ENCODE measurements at regions of chr10 and their contacts with region 1.

Region 1: GRCh38 chr10:89805599-89806013 is 104.2 kb downstream of the KIF20B start:
- ATAC-seq: no peak
- H3K4me3 ChIP-seq: no peak overlapping the region
- H3K27ac ChIP-seq: no peak overlapping the region
- H3K4me1 ChIP-seq: no peaks in the 10 kb centered on the region

Region 2: DNA sequence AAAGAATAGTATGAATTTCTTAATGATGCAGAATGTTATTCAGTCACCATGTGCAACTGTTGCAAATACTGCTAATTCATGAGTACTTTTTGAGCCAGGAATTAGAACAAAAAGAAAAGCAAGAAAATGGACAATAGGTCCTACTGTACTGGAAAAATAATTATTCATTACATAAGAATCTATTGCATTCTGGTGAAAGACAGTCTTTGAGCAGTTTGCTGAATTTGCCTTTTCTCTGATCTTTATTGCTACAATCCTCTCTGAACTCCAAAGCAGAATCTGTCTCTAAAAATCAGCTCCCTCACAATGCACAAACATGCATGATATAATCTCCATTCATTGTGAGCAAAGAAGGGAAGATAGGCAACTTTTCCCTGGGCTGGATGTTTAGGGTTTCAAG is 490.9 kb before region 1 on chr10:
- in situ Hi-C with region 1: no loop called
- ATAC-seq: peak in 3 of 8 experiments; percentile 24 to 61 (median 49)
- H3K4me3 ChIP-seq: no peak overlapping the region
- H3K27ac ChIP-seq: no peak overlapping the region
- H3K4me1 ChIP-seq: peaks cover 3 to 7% of the 10 kb centered on the region in 2 donors

Region 3: DNA sequence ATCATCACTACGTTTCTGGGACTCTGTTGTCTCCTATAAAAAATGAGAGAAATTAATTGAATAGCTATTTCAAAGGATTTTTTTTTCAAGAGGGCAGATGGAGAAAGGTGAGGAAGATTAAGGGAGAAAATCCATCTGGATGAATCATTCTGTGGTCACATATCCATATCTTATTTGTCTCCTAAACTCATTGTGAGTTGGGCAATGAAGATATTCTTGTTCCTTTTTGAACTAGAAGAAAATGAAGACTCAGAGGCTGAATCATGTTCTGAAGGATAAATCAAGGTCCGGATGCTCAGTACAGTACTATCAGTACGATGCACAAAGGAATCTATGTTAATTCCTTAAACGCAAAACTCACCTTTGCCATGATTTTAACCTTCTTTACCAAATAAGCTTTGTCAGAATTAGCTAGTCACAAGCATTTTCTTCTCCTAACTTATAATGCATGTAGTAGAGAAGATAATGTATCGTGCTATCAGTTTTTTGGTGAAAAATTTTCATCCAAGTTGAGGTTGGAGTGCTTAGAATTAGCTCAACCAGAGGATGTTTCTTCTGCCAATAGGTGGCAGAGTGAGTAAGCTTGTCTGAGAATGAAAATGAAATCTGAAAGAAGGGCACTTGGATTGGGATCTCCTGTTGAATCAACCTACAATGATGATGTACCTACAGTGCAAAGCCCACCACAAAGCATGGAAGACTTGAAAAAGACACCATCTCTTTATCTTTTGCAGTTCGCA is 342.7 kb after region 1 on chr10:
- in situ Hi-C with region 1: loop called in 1 of 9 experiments (anchors 25 kb)
- ATAC-seq: peak in 3 of 8 experiments; percentile 40 to 57 (median 53)
- H3K4me3 ChIP-seq: no peak overlapping the region
- H3K27ac ChIP-seq: no peak overlapping the region
- H3K4me1 ChIP-seq: no peaks in the 10 kb centered on the region

Region 4: GRCh38 chr10:90847417-90847816 is 1041.8 kb after region 1 on chr10:
- in situ Hi-C with region 1: loop called in 1 of 9 experiments (anchors 25 kb)
- ATAC-seq: peak in 3 of 8 experiments; percentile 48 to 77 (median 49)
- H3K4me3 ChIP-seq: no peak overlapping the region
- H3K27ac ChIP-seq: no peak overlapping the region
- H3K4me1 ChIP-seq: no peaks in the 10 kb centered on the region